Dorsolateral prefrontal cortex (tissue), 120 donors: ENCODE measurements at regions of chr19 and their contacts with region 1.

Region 1: DNA sequence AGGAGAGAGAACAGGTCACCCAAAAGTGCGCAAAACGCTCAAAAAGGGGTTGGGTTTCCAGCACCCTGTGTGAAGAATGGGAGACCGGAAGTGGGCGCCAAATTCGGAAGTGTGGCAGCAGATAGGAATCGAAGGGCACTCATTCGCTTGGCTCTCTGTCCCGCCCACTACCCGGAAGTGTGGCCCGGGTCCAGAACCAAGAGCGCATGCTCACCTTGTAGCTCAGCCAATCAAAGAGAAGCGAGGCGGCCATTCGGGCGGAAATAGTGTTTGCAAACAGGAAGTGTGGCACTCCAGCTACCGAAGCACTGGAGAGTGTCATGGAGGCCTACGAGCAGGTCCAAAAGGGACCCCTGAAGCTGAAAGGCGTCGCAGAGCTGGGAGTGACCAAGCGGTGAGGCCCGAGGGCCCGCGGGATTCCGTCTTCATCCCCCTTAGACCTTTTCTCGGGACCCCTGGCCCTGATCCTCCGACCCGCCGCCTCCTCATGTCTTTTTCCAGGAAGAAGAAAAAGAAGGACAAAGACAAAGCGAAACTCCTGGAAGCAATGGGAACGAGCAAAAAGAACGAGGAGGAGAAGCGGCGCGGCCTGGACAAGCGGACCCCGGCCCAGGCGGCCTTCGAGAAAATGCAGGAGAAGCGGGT is at the start of gene FAM32A:
- DNase-seq: peak; percentile 94 to 98 (median 96)
- H3K4me3 ChIP-seq: peak within 1 kb of the TSS; percentile 67 to 100 (median 95)
- H3K27ac ChIP-seq: peak within 1 kb of the TSS in 52 of 59 donors; percentile 12 to 93 (median 78)
- H3K27me3 ChIP-seq: peaks cover 0 to 5% (median 0%) of the 10 kb centered on the region in 45 donors
- CTCF ChIP-seq: peak; percentile 24 to 76 (median 58)
- total RNA-seq, gene FAM32A: 31.2 to 70.0 (median 51.2) TPM

Region 2: GRCh38 chr19:15629003-15629880 is 556.0 kb before region 1 on chr19:
- intact Hi-C with region 1: loop called (anchors 2 kb)
- DNase-seq: peak; percentile 57 to 80 (median 70)
- H3K4me3 ChIP-seq: peak overlapping the region in 8 of 59 donors; percentile 4 to 48 (median 34)
- H3K27ac ChIP-seq: no peak overlapping the region
- H3K27me3 ChIP-seq: peaks cover 0 to 32% (median 7%) of the 10 kb centered on the region in 45 donors
- CTCF ChIP-seq: peak; percentile 61 to 96 (median 91)

Region 3: DNA sequence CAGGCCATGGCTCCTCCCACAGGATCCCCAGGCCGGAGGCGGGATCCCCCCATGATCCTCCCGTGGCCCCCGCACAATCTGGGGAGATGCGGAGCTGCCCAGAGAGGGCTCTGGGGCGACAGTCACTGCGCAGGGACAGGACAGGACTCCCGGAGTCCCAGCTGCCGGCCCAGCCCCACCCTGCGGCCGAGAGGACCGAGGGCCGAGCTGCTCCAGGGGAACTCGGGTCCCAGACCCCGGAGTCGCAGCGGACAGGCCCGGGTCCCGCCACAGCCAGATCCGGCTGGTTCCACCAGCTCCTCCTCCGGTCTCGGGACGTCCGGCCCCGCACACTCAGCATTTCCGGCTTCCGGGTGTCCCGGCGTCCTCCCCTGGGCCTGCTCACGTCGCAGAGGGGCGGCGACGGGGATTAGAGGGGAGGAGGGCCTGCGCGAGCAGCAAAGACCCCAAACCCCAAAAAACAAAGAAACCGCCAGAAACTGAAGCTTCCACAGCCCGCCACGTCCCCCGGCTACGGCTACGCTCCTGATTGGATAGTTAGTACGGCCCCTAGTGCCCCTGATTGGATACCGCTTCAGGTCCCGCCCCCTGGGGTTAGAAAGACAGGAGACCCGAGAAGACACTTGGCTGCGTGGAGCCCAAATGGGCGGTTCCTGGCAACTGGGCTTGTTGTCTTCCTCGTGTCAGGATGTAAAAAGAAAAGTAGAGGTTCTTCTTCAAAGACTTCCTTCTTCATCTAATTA is 348.5 kb before region 1 on chr19:
- intact Hi-C with region 1: loop called in 1 of 2 experiments (anchors 10 kb)
- DNase-seq: peak; percentile 86 to 97 (median 96)
- H3K4me3 ChIP-seq: peak overlapping the region; percentile 55 to 98 (median 89)
- H3K27ac ChIP-seq: peak overlapping the region; percentile 55 to 99 (median 94)
- H3K27me3 ChIP-seq: no peaks in the 10 kb centered on the region
- CTCF ChIP-seq: peak in 29 of 56 donors; percentile 5 to 52 (median 19)

Region 4: GRCh38 chr19:16111160-16111908 is 73.9 kb before region 1 on chr19 and contains the start of gene RAB8A:
- intact Hi-C with region 1: loop called (anchors 2 to 5 kb)
- DNase-seq: peak; percentile 97 to 100 (median 98)
- H3K4me3 ChIP-seq: peak within 1 kb of the TSS; percentile 60 to 97 (median 89)
- H3K27ac ChIP-seq: peak within 1 kb of the TSS in 58 of 59 donors; percentile 21 to 96 (median 88)
- H3K27me3 ChIP-seq: no peaks in the 10 kb centered on the region
- CTCF ChIP-seq: peak; percentile 89 to 100 (median 98)
- total RNA-seq, gene RAB8A: 21.7 to 52.7 (median 32.7) TPM

Region 5: DNA sequence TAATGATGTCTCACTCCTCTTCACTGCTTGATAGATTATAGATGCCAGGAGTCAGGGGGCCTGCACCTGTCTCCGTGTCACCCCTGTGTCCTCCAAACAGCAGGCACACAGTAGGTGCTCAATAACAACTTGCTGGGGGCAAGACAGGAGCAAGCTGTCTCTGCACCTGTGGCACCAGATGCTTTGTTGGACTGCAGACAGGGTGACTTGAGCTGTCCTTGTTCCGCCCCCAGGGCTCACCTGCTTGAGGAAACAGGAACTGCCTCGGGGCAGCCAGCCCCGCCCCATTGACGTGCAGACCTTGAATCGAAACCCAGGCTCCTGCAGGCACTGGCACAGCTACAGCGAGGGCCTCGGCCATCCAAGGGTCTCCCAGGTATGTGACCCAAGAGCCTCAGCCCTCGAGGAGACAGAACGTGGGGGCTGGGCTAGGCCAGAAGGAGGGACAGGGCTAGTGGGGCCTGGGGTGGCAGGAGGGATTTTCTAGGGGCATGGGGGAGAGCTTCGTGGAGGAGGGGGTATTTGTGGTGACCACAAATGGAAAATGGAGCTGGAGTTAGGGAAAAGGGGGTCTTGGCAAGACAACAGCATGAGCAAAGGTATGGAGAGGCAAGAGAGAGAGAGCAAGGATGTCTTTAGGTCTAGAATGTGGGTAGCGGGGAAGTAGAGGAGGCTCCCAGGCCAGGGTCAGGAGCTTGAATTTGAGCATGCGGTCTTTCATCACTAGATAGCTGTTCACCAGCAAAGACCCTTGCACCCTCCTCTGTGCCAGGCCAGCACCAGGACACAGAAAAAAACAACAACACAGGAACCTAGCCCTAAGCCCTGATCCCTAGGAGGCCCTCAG is 41.6 kb before region 1 on chr19 and contains the start of gene HSH2D:
- intact Hi-C with region 1: no loop called
- DNase-seq: no peak
- H3K4me3 ChIP-seq: no peak within 1 kb of the TSS
- H3K27ac ChIP-seq: no peak within 1 kb of the TSS
- H3K27me3 ChIP-seq: no peaks in the 10 kb centered on the region
- CTCF ChIP-seq: no peak
- total RNA-seq, gene HSH2D: 0.20 to 1.2 (median 0.48) TPM in 20 of 120 experiments, not detected in the others

Region 6: DNA sequence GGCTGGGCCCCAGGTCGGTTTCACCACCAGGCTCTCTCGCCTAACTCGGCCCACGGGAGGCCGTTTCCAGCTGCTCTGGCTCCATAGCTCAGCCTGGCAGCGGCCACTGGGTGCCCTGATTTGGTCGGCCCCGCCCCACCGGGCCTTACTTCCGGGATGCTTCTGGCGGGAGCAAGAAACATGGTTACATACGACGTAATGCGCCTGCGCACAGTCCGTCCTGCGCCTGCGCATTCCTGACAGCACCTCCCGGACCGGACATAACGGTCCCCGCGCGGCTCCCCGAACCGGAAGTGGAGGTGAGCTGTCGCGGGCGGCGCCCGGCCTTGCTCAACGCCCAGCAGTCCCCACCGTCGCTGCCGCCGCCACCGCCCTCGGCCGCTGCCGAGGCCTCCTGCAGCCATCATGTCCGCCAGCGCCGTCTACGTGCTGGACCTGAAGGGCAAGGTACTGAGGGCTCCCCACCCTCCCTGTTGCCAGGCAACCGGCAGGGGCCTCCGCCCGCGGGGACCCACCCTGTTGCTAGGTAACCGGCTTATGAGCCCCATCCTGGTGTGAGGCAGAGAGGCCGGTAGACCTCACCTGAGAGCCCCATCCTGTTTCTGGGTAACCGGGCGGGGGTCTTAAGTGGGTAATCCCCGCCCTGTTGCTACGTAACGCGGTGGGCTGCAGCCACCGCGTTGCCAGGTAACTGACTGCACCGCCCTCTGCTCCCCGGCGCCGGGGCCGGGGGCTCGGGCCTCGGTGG is 12.6 kb after region 1 on chr19 and contains the start of gene AP1M1:
- intact Hi-C with region 1: loop called (anchors 1 kb)
- DNase-seq: peak; percentile 93 to 98 (median 97)
- H3K4me3 ChIP-seq: peak within 1 kb of the TSS; percentile 75 to 100 (median 97)
- H3K27ac ChIP-seq: peak within 1 kb of the TSS; percentile 41 to 93 (median 84)
- H3K27me3 ChIP-seq: no peaks in the 10 kb centered on the region
- CTCF ChIP-seq: peak in 33 of 56 donors; percentile 9 to 60 (median 34)
- total RNA-seq, gene AP1M1: 83.0 to 150 (median 106) TPM

Region 7: DNA sequence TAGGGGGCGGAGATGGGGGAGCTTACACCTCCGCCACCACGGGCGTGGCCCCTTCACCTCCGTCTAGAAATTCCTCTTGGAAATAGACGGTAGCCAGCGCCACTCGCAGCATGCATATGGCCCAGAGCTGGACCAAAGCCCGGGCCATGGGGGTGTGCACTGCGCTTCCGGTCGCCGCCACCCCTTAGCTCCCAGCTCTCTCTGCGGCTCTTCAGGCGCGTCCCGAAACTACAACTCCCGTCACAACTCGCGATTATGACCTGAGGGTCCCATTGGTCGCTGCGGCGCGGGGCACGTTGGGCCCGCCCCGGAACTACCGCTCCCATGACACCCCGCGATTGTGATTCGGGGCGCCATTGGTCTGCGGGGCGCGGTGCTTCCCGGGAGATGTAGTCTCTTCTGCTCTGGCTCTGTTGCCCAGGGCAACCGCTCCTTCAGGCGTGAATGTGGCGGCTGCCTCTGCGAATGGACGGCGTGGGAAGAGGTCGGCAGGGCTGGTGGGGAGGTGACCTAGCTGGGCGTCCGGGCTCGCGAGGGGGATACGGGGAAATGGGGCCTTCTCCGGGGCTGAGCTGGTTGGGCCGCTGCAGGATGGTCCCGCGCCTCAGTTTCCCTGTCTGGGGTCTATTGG is 310.9 kb after region 1 on chr19 and contains the starts of genes C19orf44 and CALR3:
- intact Hi-C with region 1: no loop called
- DNase-seq: peak; percentile 99
- H3K4me3 ChIP-seq: peak within 1 kb of the TSS; percentile 58 to 92 (median 74)
- H3K27ac ChIP-seq: peak within 1 kb of the TSS in 49 of 59 donors; percentile 4 to 89 (median 74)
- H3K27me3 ChIP-seq: no peaks in the 10 kb centered on the region
- CTCF ChIP-seq: peak in 46 of 56 donors; percentile 15 to 61 (median 36)
- total RNA-seq, gene C19orf44: 3.5 to 13.9 (median 7.9) TPM
- total RNA-seq, gene CALR3: 0.51 to 0.90 TPM in 2 of 120 experiments, not detected in the others